ENCODE measurements at regions of chr11 and their contacts with region 1.

Region 1: DNA sequence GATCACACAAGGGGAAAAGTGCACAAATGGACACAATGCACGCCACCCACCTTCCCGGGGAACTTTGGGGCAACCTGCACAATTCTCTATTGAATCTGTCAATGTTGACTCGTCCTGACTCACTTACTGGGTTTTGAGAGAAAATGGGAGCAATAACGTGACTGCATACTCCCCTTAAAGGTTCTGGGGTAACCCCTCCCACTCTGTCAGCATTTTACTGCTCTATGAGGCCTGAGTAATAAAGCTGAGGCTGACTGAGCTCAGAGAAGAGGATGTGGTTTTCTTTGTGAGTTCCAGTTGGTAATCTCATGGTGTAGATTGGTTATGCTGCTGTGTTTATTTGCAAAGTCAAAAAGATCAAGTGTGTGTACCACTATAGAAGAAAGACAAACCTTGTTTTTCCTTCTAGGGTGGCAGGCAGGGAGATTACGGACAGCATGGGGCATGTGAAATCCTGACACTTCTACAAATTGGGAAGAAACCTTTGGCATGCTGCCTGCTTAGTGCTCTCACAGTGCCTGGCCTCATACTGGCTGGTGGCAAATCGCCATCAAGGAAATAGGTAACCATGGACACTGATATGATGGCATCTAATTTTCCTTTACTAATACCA is 16.1 kb upstream of the APOA1 start:
- DNase-seq: peak; percentile 75
- H3K4me3 Mint-ChIP-seq: peak overlapping the region; percentile 67
- H3K27ac Mint-ChIP-seq: peak overlapping the region; percentile 96
- H3K4me1 Mint-ChIP-seq: peaks cover 64% of the 10 kb centered on the region
- H3K27me3 Mint-ChIP-seq: no peaks in the 10 kb centered on the region

Region 2: GRCh38 chr11:116707161-116707629 is 146.4 kb before region 1 on chr11:
- CTCF ChIA-PET with region 1: no interaction called
- POLR2A ChIA-PET with region 1: no interaction called
- DNase-seq: no peak
- H3K4me3 Mint-ChIP-seq: no peak overlapping the region
- H3K27ac Mint-ChIP-seq: no peak overlapping the region
- H3K4me1 Mint-ChIP-seq: no peaks in the 10 kb centered on the region
- H3K27me3 Mint-ChIP-seq: peaks cover 31% of the 10 kb centered on the region

Region 3: GRCh38 chr11:116772443-116773202 is 80.9 kb before region 1 on chr11 and contains the start of gene BUD13:
- CTCF ChIA-PET with region 1: interaction called, 3 read pairs
- POLR2A ChIA-PET with region 1: interaction called, 50 read pairs
- DNase-seq: peak; percentile 94
- H3K4me3 Mint-ChIP-seq: peak within 1 kb of the TSS; percentile 97
- H3K27ac Mint-ChIP-seq: peak within 1 kb of the TSS; percentile 91
- H3K4me1 Mint-ChIP-seq: peaks cover 59% of the 10 kb centered on the region
- H3K27me3 Mint-ChIP-seq: no peaks in the 10 kb centered on the region
- total RNA-seq, gene BUD13: 34.1 to 35.1 TPM

Region 4: GRCh38 chr11:116787786-116788486 is 65.6 kb before region 1 on chr11 and contains the start of gene ZPR1:
- CTCF ChIA-PET with region 1: interaction called, 21 read pairs
- POLR2A ChIA-PET with region 1: interaction called, 44 read pairs
- DNase-seq: peak; percentile 89
- H3K4me3 Mint-ChIP-seq: peak within 1 kb of the TSS; percentile 91
- H3K27ac Mint-ChIP-seq: peak within 1 kb of the TSS; percentile 82
- H3K4me1 Mint-ChIP-seq: peaks cover 52% of the 10 kb centered on the region
- H3K27me3 Mint-ChIP-seq: peaks cover 9% of the 10 kb centered on the region
- total RNA-seq, gene ZPR1: 55.6 to 57.6 TPM

Region 5: DNA sequence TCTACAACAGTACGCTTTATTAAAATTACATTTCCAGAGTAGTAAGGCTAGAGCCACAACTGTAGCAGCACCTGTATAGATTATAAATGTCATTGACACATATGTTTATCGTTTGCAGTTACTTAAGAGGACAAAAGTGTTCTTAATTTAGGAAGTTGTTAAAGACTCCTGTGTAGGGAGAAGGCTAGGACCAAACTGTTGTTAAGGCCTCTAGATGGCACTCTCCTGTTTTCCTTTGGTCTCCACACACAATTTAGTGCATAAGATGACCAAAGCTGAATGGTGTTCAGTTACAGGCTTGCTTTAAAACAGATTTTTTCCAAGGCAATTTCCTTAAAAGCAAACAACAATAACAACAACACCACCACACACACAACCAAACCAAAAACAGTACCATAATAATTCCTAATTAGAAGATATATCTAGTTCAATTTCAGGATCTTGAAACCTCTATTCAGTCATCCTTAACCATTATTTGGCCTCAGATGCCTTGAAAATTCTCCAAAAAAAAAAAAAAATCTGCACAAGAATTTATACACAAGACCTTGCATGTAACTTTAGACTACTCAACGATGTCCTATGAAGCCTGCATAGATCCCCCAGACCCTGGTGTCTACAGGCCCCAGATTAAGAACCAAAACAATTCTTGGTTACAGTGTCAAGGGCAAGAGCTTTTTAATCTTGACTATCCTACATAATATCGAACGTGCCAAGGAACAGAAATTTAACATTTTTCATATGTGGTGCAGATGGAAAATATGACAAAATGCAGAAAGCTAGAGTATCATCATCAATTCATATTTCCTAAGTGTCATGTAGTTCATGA is 26.4 kb after region 1 on chr11:
- CTCF ChIA-PET with region 1: interaction called, 20 read pairs
- POLR2A ChIA-PET with region 1: interaction called, 3 read pairs
- DNase-seq: no peak
- H3K4me3 Mint-ChIP-seq: no peak overlapping the region
- H3K27ac Mint-ChIP-seq: peak overlapping the region; percentile 6
- H3K4me1 Mint-ChIP-seq: peaks cover 17% of the 10 kb centered on the region
- H3K27me3 Mint-ChIP-seq: no peaks in the 10 kb centered on the region

Region 6: DNA sequence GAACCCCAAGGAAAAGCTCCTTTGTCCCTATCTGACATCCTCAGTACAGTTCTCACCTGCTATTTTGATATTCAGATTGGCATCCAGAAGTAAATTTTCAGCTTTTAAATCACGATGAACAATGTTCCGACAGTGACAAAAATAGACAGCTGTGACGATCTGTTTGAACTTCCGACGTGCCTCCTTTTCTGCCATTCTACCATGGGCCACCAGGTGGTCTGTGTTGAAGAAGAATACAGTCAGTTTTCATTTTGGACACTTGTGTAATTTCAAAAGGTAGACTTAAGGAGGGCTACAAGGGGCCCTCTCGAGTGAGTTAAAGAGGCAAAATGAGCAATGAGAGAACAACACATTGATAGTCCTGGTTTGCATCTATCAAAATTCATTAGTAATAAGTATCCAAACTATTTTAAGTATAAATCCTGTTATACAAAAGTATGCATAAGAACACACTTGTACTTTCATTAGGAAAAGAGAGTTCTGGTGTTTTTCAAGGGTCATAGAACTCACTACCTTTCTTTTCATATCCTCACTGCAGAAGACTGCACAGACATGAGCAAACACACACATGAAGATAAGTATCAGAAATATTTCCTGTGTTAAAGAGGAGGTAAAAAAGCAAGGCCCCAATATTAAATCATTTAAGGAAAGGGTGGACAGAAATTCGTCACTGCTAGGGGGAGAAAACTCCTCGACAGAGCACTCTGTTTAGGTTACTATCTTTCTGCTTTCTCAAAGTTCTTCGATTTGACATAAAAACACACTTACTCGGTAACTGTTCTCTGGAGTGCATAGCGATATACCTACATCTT is 73.8 kb after region 1 on chr11:
- CTCF ChIA-PET with region 1: no interaction called
- POLR2A ChIA-PET with region 1: interaction called, 57 read pairs
- DNase-seq: peak; percentile 61
- H3K4me3 Mint-ChIP-seq: peak overlapping the region; percentile 36
- H3K27ac Mint-ChIP-seq: peak overlapping the region; percentile 86
- H3K4me1 Mint-ChIP-seq: peaks cover 81% of the 10 kb centered on the region
- H3K27me3 Mint-ChIP-seq: no peaks in the 10 kb centered on the region

Region 7: GRCh38 chr11:117143871-117144476 is 290.4 kb after region 1 on chr11 and contains the start of gene PAFAH1B2:
- CTCF ChIA-PET with region 1: interaction called, 3 read pairs
- POLR2A ChIA-PET with region 1: interaction called, 19 read pairs
- DNase-seq: peak; percentile 95
- H3K4me3 Mint-ChIP-seq: peak within 1 kb of the TSS; percentile 96
- H3K27ac Mint-ChIP-seq: peak within 1 kb of the TSS; percentile 86
- H3K4me1 Mint-ChIP-seq: peaks cover 45% of the 10 kb centered on the region
- H3K27me3 Mint-ChIP-seq: peaks cover 17% of the 10 kb centered on the region
- total RNA-seq, gene PAFAH1B2: 60.1 to 62.8 TPM